Heart left ventricle (tissue), 16 donors: ENCODE measurements at regions of chr2 and their contacts with region 1.

Region 1: GRCh38 chr2:230751062-230751461 is 38.4 kb downstream of the CAB39 start:
- DNase-seq: no peak
- ATAC-seq: peak in 2 of 4 donors; percentile 9 to 31
- H3K4me3 ChIP-seq: no peak overlapping the region
- H3K27ac ChIP-seq: no peak overlapping the region
- H3K4me1 ChIP-seq: peaks cover 0 to 47% (median 24%) of the 10 kb centered on the region in 12 donors
- H3K27me3 ChIP-seq: no peaks in the 10 kb centered on the region
- CTCF ChIP-seq: no peak
- POLR2A ChIP-seq: no peak

Region 2: GRCh38 chr2:230738391-230738811 is 12.7 kb before region 1 on chr2:
- intact Hi-C with region 1: loop called in 1 of 10 experiments (anchors 1 kb)
- DNase-seq: no peak
- ATAC-seq: peak in 2 of 4 donors; percentile 13 to 46
- H3K4me3 ChIP-seq: no peak overlapping the region
- H3K27ac ChIP-seq: peak overlapping the region in 4 of 12 donors; percentile 21 to 47 (median 37)
- H3K4me1 ChIP-seq: peaks cover 0 to 57% (median 31%) of the 10 kb centered on the region in 12 donors
- H3K27me3 ChIP-seq: no peaks in the 10 kb centered on the region
- CTCF ChIP-seq: no peak
- POLR2A ChIP-seq: no peak